Dorsolateral prefrontal cortex (tissue), 120 donors: ENCODE measurements at regions of chr10 and their contacts with region 1.

Region 1: DNA sequence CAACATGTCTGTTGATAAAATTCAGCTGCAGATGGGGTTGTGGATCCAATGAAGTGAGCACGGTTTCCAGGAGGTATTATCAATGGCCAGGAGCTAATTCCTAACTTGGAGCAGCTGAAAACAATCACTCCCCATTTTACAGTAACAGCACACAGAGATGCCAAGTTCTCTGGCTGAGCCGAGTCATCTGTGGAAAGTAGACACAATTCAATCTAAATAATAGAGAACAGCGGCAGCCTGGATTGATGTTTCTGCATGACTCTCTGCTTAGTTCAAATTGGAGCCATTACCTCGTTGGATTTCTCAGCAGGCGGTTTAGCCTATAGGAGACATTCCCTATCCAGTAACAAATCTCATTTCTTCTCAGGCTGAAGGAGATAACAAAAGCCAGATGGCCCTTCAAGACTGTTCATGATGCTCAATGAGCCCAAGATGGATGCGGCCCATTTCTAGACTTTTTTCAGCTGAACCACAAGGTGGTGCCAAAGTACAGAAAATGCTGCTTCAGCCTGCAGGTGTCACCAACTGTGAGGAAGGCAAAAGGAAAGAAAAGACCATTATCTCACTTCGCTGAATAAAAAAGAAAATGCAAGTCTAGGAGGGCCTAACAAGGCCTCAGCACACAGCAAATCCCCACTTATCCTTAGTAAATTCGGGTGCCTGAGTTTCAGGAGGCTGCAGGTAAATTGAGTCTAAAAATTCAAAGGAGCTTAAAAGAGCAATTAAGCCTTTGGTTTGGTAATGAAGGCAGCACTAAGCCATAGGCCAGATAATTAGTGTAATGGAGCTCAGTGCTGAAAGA is 83.7 kb downstream of the SLC16A9 start:
- DNase-seq: peak in 7 of 10 donors; percentile 19 to 68 (median 48)
- H3K4me3 ChIP-seq: peak overlapping the region in 15 of 59 donors; percentile 15 to 40 (median 28)
- H3K27ac ChIP-seq: peak overlapping the region in 33 of 59 donors; percentile 1 to 81 (median 48)
- H3K27me3 ChIP-seq: no peaks in the 10 kb centered on the region
- CTCF ChIP-seq: peak; percentile 79 to 99 (median 91)

Region 2: GRCh38 chr10:58952747-58953466 is 673.0 kb before region 1 on chr10:
- intact Hi-C with region 1: loop called in 1 of 2 experiments (anchors 5 kb)
- DNase-seq: peak in 4 of 10 donors; percentile 36 to 83 (median 50)
- H3K4me3 ChIP-seq: no peak overlapping the region
- H3K27ac ChIP-seq: peak overlapping the region in 57 of 59 donors; percentile 10 to 91 (median 74)
- H3K27me3 ChIP-seq: no peaks in the 10 kb centered on the region
- CTCF ChIP-seq: peak; percentile 70 to 97 (median 87)

Region 3: GRCh38 chr10:59435707-59436106 is 190.2 kb before region 1 on chr10:
- intact Hi-C with region 1: no loop called
- DNase-seq: no peak
- H3K4me3 ChIP-seq: no peak overlapping the region
- H3K27ac ChIP-seq: no peak overlapping the region
- H3K27me3 ChIP-seq: no peaks in the 10 kb centered on the region
- CTCF ChIP-seq: no peak

Region 4: GRCh38 chr10:59470570-59470969 is 155.4 kb before region 1 on chr10:
- intact Hi-C with region 1: loop called in 1 of 2 experiments (anchors 10 kb)
- DNase-seq: no peak
- H3K4me3 ChIP-seq: no peak overlapping the region
- H3K27ac ChIP-seq: no peak overlapping the region
- H3K27me3 ChIP-seq: no peaks in the 10 kb centered on the region
- CTCF ChIP-seq: no peak

Region 5: DNA sequence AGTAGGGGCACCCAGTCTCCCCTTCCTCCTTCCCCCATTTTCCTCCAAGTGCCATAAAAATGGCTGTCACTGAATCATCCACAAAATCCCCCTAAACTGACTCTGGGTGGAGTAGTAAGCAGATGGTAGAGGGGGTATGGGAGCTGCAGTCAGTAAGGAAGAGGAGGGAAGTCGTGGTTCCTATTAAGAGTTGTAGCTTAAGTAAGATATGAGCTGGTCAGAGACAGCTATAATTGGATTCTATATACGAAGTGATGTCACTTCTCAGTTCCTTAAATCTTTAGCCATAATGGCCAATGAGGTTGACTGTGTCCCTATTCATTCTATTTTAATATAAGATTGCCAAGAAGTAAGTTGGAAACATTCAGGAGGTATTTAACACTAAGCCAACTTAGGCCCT is 47.9 kb before region 1 on chr10:
- intact Hi-C with region 1: no loop called
- DNase-seq: no peak
- H3K4me3 ChIP-seq: no peak overlapping the region
- H3K27ac ChIP-seq: no peak overlapping the region
- H3K27me3 ChIP-seq: no peaks in the 10 kb centered on the region
- CTCF ChIP-seq: no peak

Region 6: GRCh38 chr10:59808896-59809643 is 183.1 kb after region 1 on chr10:
- intact Hi-C with region 1: loop called in 1 of 2 experiments (anchors 2 kb)
- DNase-seq: peak; percentile 61 to 88 (median 74)
- H3K4me3 ChIP-seq: peak overlapping the region in 3 of 59 donors; percentile 5 to 24 (median 13)
- H3K27ac ChIP-seq: peak overlapping the region in 6 of 59 donors; percentile 6 to 68 (median 12)
- H3K27me3 ChIP-seq: no peaks in the 10 kb centered on the region
- CTCF ChIP-seq: peak; percentile 24 to 80 (median 68)

Region 7: GRCh38 chr10:59857049-59857448 is 231.1 kb after region 1 on chr10:
- intact Hi-C with region 1: no loop called
- DNase-seq: no peak
- H3K4me3 ChIP-seq: no peak overlapping the region
- H3K27ac ChIP-seq: no peak overlapping the region
- H3K27me3 ChIP-seq: no peaks in the 10 kb centered on the region
- CTCF ChIP-seq: no peak

Region 8: GRCh38 chr10:59906417-59907202 is 280.7 kb after region 1 on chr10 and contains the start of gene CCDC6:
- intact Hi-C with region 1: loop called (anchors 5 kb)
- DNase-seq: peak; percentile 82 to 94 (median 90)
- H3K4me3 ChIP-seq: peak within 1 kb of the TSS; percentile 58 to 99 (median 93)
- H3K27ac ChIP-seq: peak within 1 kb of the TSS; percentile 66 to 99 (median 94)
- H3K27me3 ChIP-seq: no peaks in the 10 kb centered on the region
- CTCF ChIP-seq: peak; percentile 62 to 95 (median 82)
- total RNA-seq, gene CCDC6: 30.9 to 97.2 (median 68.8) TPM

Region 9: GRCh38 chr10:60208676-60209269 is 582.9 kb after region 1 on chr10:
- intact Hi-C with region 1: loop called in 1 of 2 experiments (anchors 10 kb)
- DNase-seq: no peak
- H3K4me3 ChIP-seq: no peak overlapping the region
- H3K27ac ChIP-seq: peak overlapping the region in 29 of 59 donors; percentile 7 to 73 (median 34)
- H3K27me3 ChIP-seq: no peaks in the 10 kb centered on the region
- CTCF ChIP-seq: peak; percentile 26 to 88 (median 74)